Transverse colon (tissue), 4 donors: ENCODE measurements at regions of chr4 and their contacts with region 1.

Region 1: GRCh38 chr4:113952452-113953029 is 26.9 kb downstream of the ARSJ start:
- DNase-seq: no peak
- H3K4me3 ChIP-seq: no peak overlapping the region
- H3K27ac ChIP-seq: no peak overlapping the region
- H3K4me1 ChIP-seq: peaks cover 5 to 47% (median 17%) of the 10 kb centered on the region in 4 donors
- H3K27me3 ChIP-seq: no peaks in the 10 kb centered on the region
- CTCF ChIP-seq: peak; percentile 68 to 81 (median 79)
- EP300 ChIP-seq: no peak
- POLR2A ChIP-seq: no peak

Region 2: DNA sequence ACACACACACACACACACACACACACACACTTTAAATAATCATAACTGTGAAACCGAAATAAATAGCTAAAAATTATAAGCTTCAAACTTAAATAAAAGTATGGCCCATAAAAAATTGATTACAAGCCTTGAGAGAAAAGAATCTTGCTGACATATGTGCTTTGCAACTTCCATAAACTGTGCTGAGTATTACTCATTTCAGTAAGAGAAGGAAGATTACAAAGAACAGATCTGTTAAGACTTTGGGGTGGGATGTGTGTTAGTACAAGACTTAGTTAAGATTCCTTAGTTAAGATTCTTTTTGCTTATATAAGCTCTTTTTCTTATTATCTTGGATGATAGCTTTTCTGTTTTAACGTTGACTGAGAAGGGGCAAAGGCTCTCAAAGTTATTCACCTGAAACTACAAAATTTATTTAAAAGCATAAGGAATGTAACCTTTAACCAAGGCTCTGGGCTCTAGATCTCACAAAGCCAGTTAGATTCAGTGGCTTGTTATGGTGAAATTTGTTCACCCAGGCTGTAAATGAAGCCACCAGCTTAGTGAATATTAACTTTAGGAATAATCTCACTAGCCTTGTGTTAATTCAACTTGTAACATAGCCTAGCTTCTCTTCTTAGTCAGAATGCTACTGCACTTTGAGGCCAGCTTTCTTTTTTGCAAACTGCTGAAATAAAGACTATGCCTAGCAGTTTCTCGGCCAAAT is 31.3 kb before region 1 on chr4:
- in situ Hi-C with region 1: no loop called
- intact Hi-C with region 1: no loop called
- DNase-seq: no peak
- H3K4me3 ChIP-seq: no peak overlapping the region
- H3K27ac ChIP-seq: no peak overlapping the region
- H3K4me1 ChIP-seq: peaks cover 0 to 6% (median 0%) of the 10 kb centered on the region in 4 donors
- H3K27me3 ChIP-seq: no peaks in the 10 kb centered on the region
- CTCF ChIP-seq: no peak
- EP300 ChIP-seq: no peak
- POLR2A ChIP-seq: no peak

Region 3: GRCh38 chr4:113935190-113935589 is 17.4 kb before region 1 on chr4:
- in situ Hi-C with region 1: no loop called
- intact Hi-C with region 1: no loop called
- DNase-seq: no peak
- H3K4me3 ChIP-seq: no peak overlapping the region
- H3K27ac ChIP-seq: no peak overlapping the region
- H3K4me1 ChIP-seq: no peaks in the 10 kb centered on the region
- H3K27me3 ChIP-seq: no peaks in the 10 kb centered on the region
- CTCF ChIP-seq: no peak
- EP300 ChIP-seq: no peak
- POLR2A ChIP-seq: no peak

Region 4: DNA sequence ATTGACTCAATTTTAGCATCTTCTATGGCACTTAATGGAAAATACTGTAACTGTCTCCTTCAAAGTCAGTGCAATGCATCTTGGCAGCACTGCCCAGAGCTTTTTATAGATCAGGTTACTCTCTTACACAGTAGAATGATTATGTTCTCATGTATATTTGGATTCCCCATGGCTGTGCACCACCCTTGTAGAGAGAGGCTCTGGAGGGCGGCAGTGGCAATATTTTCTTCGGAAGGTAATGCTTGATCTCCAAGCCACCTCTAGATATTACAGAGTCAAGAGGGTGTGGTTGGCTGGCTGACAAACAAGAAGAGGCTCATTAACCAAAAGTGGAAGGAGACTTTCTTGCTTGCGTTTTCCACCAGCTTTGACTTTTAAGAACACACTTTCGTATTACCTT is 99.7 kb after region 1 on chr4:
- in situ Hi-C with region 1: loop called in 1 of 4 experiments (anchors 25 kb)
- intact Hi-C with region 1: no loop called
- DNase-seq: no peak
- H3K4me3 ChIP-seq: no peak overlapping the region
- H3K27ac ChIP-seq: no peak overlapping the region
- H3K4me1 ChIP-seq: no peaks in the 10 kb centered on the region
- H3K27me3 ChIP-seq: no peaks in the 10 kb centered on the region
- CTCF ChIP-seq: no peak
- EP300 ChIP-seq: no peak
- POLR2A ChIP-seq: no peak